Heart left ventricle (tissue), 16 donors: ENCODE measurements at regions of chr1 and their contacts with region 1.

Region 1: GRCh38 chr1:171644805-171645483 is 7.5 kb downstream of the MYOC start:
- DNase-seq: peak; percentile 68 to 81 (median 76)
- ATAC-seq: peak; percentile 70 to 90 (median 85)
- H3K4me3 ChIP-seq: peak overlapping the region in 2 of 12 donors; percentile 5 to 18
- H3K27ac ChIP-seq: peak overlapping the region; percentile 35 to 90 (median 79)
- H3K4me1 ChIP-seq: peaks cover 0 to 21% (median 12%) of the 10 kb centered on the region in 12 donors
- H3K27me3 ChIP-seq: no peaks in the 10 kb centered on the region
- CTCF ChIP-seq: peak; percentile 69 to 87 (median 82)
- POLR2A ChIP-seq: no peak

Region 2: DNA sequence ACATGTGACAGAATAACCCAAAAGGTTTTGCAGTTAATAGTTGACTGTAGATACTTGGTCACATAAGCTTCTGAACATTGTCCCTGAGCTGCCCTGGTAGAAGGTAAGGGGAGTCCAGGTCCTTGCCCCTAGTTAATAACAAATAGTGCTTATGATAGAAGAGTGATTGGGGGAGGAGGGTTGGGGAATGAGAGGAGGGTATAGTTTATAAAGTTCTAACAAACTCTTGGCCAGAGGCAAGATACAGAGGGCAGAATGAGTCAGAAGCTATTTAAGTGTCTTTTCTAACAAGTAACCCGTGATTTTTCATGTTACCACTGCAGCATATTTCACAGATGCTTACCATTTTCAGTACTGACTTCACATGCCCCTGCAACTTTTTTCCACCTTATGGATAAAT is 49.6 kb before region 1 on chr1:
- intact Hi-C with region 1: no loop called
- DNase-seq: no peak
- ATAC-seq: peak in 3 of 4 donors; percentile 52 to 60 (median 59)
- H3K4me3 ChIP-seq: no peak overlapping the region
- H3K27ac ChIP-seq: no peak overlapping the region
- H3K4me1 ChIP-seq: peaks cover 0 to 6% (median 0%) of the 10 kb centered on the region in 12 donors
- H3K27me3 ChIP-seq: no peaks in the 10 kb centered on the region
- CTCF ChIP-seq: no peak
- POLR2A ChIP-seq: no peak

Region 3: DNA sequence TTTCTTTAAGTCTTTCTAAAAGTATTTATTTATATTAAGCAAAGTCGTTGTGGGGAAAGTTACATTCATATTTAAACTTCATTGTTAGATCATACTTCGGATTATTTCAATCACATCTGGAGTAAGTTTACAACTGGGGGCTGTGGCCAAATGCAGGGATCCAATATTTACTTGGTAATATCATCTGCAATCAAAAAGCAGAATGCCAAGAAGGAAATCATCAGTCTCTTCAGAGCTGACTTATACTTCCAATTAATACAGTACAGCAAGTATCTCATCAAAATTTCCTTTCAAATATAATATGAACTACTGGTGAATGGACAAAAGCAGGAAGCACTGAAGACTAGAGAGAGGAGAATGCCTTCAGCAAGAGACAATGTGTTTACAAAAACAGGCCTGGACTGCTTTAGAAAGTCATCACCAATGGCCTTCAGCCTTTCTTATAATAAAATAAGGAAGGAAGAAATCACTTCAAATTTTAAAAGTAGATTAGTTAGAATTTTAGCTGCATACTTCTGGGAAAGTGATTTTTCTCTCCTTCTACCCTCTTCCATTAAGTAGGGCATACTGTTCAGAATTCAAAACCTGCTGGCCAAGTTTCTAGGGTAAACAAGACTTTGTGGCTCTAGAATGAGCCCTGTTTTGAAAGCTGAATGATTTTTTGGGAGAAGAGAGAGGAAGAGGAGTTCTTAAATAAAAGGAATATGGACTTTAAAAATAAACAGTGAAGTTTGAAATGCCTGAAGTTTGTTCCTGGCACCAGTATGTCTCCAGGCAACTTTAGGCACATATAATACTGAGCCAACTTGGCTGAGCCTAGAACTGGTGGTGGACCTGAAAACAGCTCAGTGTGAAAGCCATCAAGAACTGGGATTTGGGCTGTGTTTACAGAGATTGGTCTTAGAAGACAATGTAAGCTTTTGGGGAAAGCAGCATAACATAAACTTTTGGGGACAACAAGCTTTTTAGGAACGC is 29.8 kb after region 1 on chr1:
- intact Hi-C with region 1: no loop called
- DNase-seq: no peak
- ATAC-seq: peak; percentile 47 to 59 (median 54)
- H3K4me3 ChIP-seq: no peak overlapping the region
- H3K27ac ChIP-seq: peak overlapping the region in 8 of 12 donors; percentile 33 to 71 (median 38)
- H3K4me1 ChIP-seq: peaks cover 0 to 16% (median 1%) of the 10 kb centered on the region in 12 donors
- H3K27me3 ChIP-seq: no peaks in the 10 kb centered on the region
- CTCF ChIP-seq: no peak
- POLR2A ChIP-seq: no peak

Region 4: DNA sequence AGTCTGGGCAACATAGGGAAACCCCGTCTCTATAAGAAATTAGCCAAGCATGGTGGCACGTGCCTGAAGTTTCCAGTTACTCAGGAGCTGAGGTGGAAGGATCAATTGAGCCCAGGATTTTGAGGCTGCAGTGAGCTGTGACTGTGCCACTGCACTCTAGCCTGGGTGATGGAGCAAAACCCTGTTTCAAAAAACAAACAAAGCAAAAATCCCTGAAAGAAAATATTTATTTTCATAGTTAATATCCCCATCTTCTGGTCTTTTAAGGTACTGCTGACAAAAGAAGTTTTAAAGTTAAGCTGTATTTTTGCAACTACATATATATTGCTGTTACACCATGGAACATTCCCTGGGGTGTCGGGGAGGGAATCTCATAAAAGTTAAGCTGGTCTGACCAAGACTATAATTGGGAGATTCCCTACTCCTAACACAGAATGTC is 70.9 kb after region 1 on chr1:
- intact Hi-C with region 1: loop called (anchors 1 to 5 kb)
- DNase-seq: no peak
- ATAC-seq: peak in 2 of 4 donors; percentile 18 to 26
- H3K4me3 ChIP-seq: no peak overlapping the region
- H3K27ac ChIP-seq: peak overlapping the region in 5 of 12 donors; percentile 8 to 45 (median 18)
- H3K4me1 ChIP-seq: peaks cover 0 to 22% (median 3%) of the 10 kb centered on the region in 12 donors
- H3K27me3 ChIP-seq: no peaks in the 10 kb centered on the region
- CTCF ChIP-seq: peak; percentile 29 to 68 (median 54)
- POLR2A ChIP-seq: no peak

Region 5: GRCh38 chr1:171741872-171742576 is 97.1 kb after region 1 on chr1 and contains the start of gene VAMP4:
- intact Hi-C with region 1: loop called in 2 of 10 experiments (anchors 1 to 5 kb)
- DNase-seq: peak; percentile 89 to 93 (median 90)
- ATAC-seq: peak; percentile 89 to 94 (median 94)
- H3K4me3 ChIP-seq: peak within 1 kb of the TSS; percentile 68 to 96 (median 88)
- H3K27ac ChIP-seq: peak within 1 kb of the TSS; percentile 86 to 98 (median 95)
- H3K4me1 ChIP-seq: peaks cover 0 to 50% (median 23%) of the 10 kb centered on the region in 12 donors
- H3K27me3 ChIP-seq: no peaks in the 10 kb centered on the region
- CTCF ChIP-seq: no peak
- POLR2A ChIP-seq: peak in 1 of 2 donors; percentile 70
- total RNA-seq, gene VAMP4: 3.8 to 11.3 (median 7.2) TPM

Region 6: GRCh38 chr1:171769171-171769570 is 124.2 kb after region 1 on chr1:
- intact Hi-C with region 1: loop called in 1 of 10 experiments (anchors 10 kb)
- DNase-seq: no peak
- ATAC-seq: no peak
- H3K4me3 ChIP-seq: no peak overlapping the region
- H3K27ac ChIP-seq: no peak overlapping the region
- H3K4me1 ChIP-seq: peaks cover 0 to 15% (median 0%) of the 10 kb centered on the region in 12 donors
- H3K27me3 ChIP-seq: no peaks in the 10 kb centered on the region
- CTCF ChIP-seq: no peak
- POLR2A ChIP-seq: no peak

Region 7: GRCh38 chr1:171781176-171781875 is 136.4 kb after region 1 on chr1 and contains the start of gene METTL13:
- intact Hi-C with region 1: loop called in 8 of 10 experiments (anchors 2 to 10 kb)
- DNase-seq: peak; percentile 98 to 99 (median 99)
- ATAC-seq: peak; percentile 100
- H3K4me3 ChIP-seq: peak within 1 kb of the TSS; percentile 46 to 91 (median 75)
- H3K27ac ChIP-seq: peak within 1 kb of the TSS; percentile 54 to 93 (median 90)
- H3K4me1 ChIP-seq: peaks cover 0 to 31% (median 18%) of the 10 kb centered on the region in 12 donors
- H3K27me3 ChIP-seq: no peaks in the 10 kb centered on the region
- CTCF ChIP-seq: peak in 1 of 12 donors; percentile 12
- POLR2A ChIP-seq: peak; percentile 73 to 97
- total RNA-seq, gene METTL13: 13.1 to 24.1 (median 14.8) TPM

Region 8: GRCh38 chr1:171984850-171985485 is 340.0 kb after region 1 on chr1:
- intact Hi-C with region 1: loop called (anchors 5 to 10 kb)
- DNase-seq: no peak
- ATAC-seq: peak in 1 of 4 donors; percentile 69
- H3K4me3 ChIP-seq: no peak overlapping the region
- H3K27ac ChIP-seq: no peak overlapping the region
- H3K4me1 ChIP-seq: peaks cover 0 to 8% (median 5%) of the 10 kb centered on the region in 12 donors
- H3K27me3 ChIP-seq: no peaks in the 10 kb centered on the region
- CTCF ChIP-seq: peak; percentile 63 to 88 (median 80)
- POLR2A ChIP-seq: no peak